ENCODE measurements at regions of chr17 and their contacts with region 1.

Region 1: DNA sequence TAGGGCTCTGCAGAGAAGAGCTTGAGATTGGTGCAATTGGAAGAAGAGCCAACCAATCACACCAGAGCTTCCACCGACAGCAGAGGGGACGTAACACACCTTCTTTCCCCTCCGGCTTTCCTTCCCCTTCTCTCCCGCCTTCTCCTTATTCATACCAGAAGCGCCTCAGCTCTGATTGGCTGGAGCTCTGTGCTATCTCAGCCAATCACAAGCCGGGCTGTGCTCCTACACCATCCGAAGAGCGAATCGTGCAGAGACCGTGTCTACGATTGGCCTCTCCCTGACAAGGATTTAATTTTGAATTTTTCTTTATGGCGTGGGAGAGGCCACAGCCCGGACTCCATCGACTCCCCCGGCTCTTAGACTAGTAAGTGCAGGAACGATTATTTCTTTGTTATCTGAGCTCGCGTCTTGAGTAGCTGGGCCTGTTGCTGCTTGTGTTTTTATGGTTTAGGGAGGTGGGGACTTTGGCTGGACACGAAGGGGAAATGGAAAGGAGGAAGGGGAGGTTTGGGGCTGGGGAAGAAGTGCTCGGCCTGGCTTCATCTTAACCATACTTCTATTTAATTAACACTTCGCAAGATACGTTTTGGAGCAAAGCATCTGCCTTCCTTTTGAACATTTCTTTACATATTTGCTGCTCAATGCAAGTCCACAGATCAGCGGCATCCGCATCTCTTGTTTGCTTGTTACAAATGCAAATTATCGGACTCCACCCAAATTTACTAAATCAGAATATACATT is at the start of gene PRR11:
- DNase-seq: peak; percentile 81 to 99 (median 88)
- ATAC-seq: peak; percentile 84
- H3K4me3 ChIP-seq: peak within 1 kb of the TSS; percentile 87
- H3K4me3 Mint-ChIP-seq: no peak within 1 kb of the TSS
- H3K27ac ChIP-seq: peak within 1 kb of the TSS; percentile 39 to 73
- H3K27ac Mint-ChIP-seq: no peak within 1 kb of the TSS
- H3K4me1 ChIP-seq: peaks cover 27% of the 10 kb centered on the region
- H3K4me1 Mint-ChIP-seq: peaks cover 38% of the 10 kb centered on the region
- H3K27me3 ChIP-seq: no peaks in the 10 kb centered on the region
- H3K27me3 Mint-ChIP-seq: no peaks in the 10 kb centered on the region
- CTCF ChIP-seq: no peak
- total RNA-seq, gene PRR11: 0.69 to 0.92 TPM

Region 2: GRCh38 chr17:57255776-57256681 is 1899.6 kb before region 1 on chr17 and contains the start of gene MSI2:
- CTCF ChIA-PET with region 1: no interaction called
- POLR2A ChIA-PET with region 1: interaction called, 3 read pairs
- intact Hi-C with region 1: loop called in 1 of 2 experiments (anchors 10 kb)
- DNase-seq: peak; percentile 82 to 96 (median 90)
- ATAC-seq: peak; percentile 71
- H3K4me3 ChIP-seq: peak within 1 kb of the TSS; percentile 74
- H3K4me3 Mint-ChIP-seq: peak within 1 kb of the TSS; percentile 99
- H3K27ac ChIP-seq: peak within 1 kb of the TSS; percentile 72 to 82
- H3K27ac Mint-ChIP-seq: peak within 1 kb of the TSS; percentile 98
- H3K4me1 ChIP-seq: peaks cover 35% of the 10 kb centered on the region
- H3K4me1 Mint-ChIP-seq: peaks cover 48% of the 10 kb centered on the region
- H3K27me3 ChIP-seq: no peaks in the 10 kb centered on the region
- H3K27me3 Mint-ChIP-seq: no peaks in the 10 kb centered on the region
- CTCF ChIP-seq: no peak
- total RNA-seq, gene MSI2: 129 to 132 TPM

Region 3: GRCh38 chr17:58692239-58693055 is 463.2 kb before region 1 on chr17 and contains the start of gene RAD51C:
- CTCF ChIA-PET with region 1: no interaction called
- POLR2A ChIA-PET with region 1: no interaction called
- intact Hi-C with region 1: loop called in 1 of 2 experiments (anchors 10 kb)
- DNase-seq: peak; percentile 70 to 92 (median 84)
- ATAC-seq: peak; percentile 96
- H3K4me3 ChIP-seq: peak within 1 kb of the TSS; percentile 79
- H3K4me3 Mint-ChIP-seq: peak within 1 kb of the TSS; percentile 93
- H3K27ac ChIP-seq: peak within 1 kb of the TSS; percentile 66 to 83
- H3K27ac Mint-ChIP-seq: peak within 1 kb of the TSS; percentile 86
- H3K4me1 ChIP-seq: peaks cover 13% of the 10 kb centered on the region
- H3K4me1 Mint-ChIP-seq: peaks cover 28% of the 10 kb centered on the region
- H3K27me3 ChIP-seq: no peaks in the 10 kb centered on the region
- H3K27me3 Mint-ChIP-seq: no peaks in the 10 kb centered on the region
- CTCF ChIP-seq: no peak
- total RNA-seq, gene RAD51C: 10.4 to 11.6 TPM

Region 4: GRCh38 chr17:59202320-59202719 is 46.7 kb after region 1 on chr17:
- CTCF ChIA-PET with region 1: no interaction called
- POLR2A ChIA-PET with region 1: no interaction called
- intact Hi-C with region 1: loop called in 1 of 2 experiments (anchors 5 kb)
- DNase-seq: no peak
- ATAC-seq: no peak
- H3K4me3 ChIP-seq: no peak overlapping the region
- H3K4me3 Mint-ChIP-seq: no peak overlapping the region
- H3K27ac ChIP-seq: no peak overlapping the region
- H3K27ac Mint-ChIP-seq: no peak overlapping the region
- H3K4me1 ChIP-seq: no peaks in the 10 kb centered on the region
- H3K4me1 Mint-ChIP-seq: no peaks in the 10 kb centered on the region
- H3K27me3 ChIP-seq: no peaks in the 10 kb centered on the region
- H3K27me3 Mint-ChIP-seq: no peaks in the 10 kb centered on the region
- CTCF ChIP-seq: no peak

Region 5: DNA sequence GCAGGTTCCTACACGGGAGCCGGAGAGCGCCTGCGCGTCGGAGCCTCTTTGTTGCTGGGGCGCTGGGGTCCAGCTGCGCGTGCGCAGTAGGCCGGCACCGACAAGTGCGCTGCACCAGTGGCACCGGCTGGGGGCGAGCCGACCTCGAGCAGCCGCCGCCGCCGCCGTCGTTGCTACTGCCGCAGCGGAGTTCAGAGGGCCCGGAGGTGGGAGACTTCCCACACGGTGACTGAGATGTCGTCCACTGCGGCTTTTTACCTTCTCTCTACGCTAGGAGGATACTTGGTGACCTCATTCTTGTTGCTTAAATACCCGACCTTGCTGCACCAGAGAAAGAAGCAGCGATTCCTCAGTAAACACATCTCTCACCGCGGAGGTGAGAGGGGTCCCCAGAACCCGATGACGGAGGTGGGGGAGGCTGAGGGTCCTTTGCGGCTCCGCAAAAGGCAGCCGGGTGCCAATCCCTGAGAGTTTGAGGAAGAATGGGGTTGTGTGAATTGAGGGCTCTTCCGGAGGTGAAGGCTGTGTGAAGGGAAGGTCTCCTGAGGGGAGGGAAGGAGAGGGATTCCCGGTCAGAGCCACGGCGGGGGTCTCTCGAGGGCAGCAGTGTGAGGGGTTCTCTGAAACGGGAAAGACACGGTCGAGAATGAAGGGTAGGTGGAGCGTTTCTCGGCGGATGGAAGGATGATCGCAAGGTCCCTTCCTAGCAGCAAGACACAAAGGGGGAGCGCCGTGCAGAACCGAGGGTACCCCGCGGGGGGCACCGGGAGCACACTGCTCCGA is 65.0 kb after region 1 on chr17 and contains the start of gene GDPD1:
- CTCF ChIA-PET with region 1: no interaction called
- POLR2A ChIA-PET with region 1: interaction called, 16 read pairs
- intact Hi-C with region 1: loop called in 1 of 2 experiments (anchors 2 kb)
- DNase-seq: peak; percentile 94 to 99 (median 97)
- ATAC-seq: peak; percentile 97
- H3K4me3 ChIP-seq: peak within 1 kb of the TSS; percentile 67
- H3K4me3 Mint-ChIP-seq: peak within 1 kb of the TSS; percentile 96
- H3K27ac ChIP-seq: peak within 1 kb of the TSS; percentile 66 to 87
- H3K27ac Mint-ChIP-seq: peak within 1 kb of the TSS; percentile 99
- H3K4me1 ChIP-seq: peaks cover 10% of the 10 kb centered on the region
- H3K4me1 Mint-ChIP-seq: peaks cover 16% of the 10 kb centered on the region
- H3K27me3 ChIP-seq: no peaks in the 10 kb centered on the region
- H3K27me3 Mint-ChIP-seq: no peaks in the 10 kb centered on the region
- CTCF ChIP-seq: peak; percentile 79
- total RNA-seq, gene GDPD1: 2.0 to 2.3 TPM

Region 6: GRCh38 chr17:59565171-59565969 is 409.8 kb after region 1 on chr17 and contains the start of gene DHX40:
- CTCF ChIA-PET with region 1: no interaction called
- POLR2A ChIA-PET with region 1: interaction called, 10 read pairs
- intact Hi-C with region 1: loop called in 1 of 2 experiments (anchors 10 kb)
- DNase-seq: peak; percentile 86 to 99 (median 92)
- ATAC-seq: peak; percentile 87
- H3K4me3 ChIP-seq: peak within 1 kb of the TSS; percentile 90
- H3K4me3 Mint-ChIP-seq: peak within 1 kb of the TSS; percentile 100
- H3K27ac ChIP-seq: peak within 1 kb of the TSS; percentile 86 to 91
- H3K27ac Mint-ChIP-seq: peak within 1 kb of the TSS; percentile 97
- H3K4me1 ChIP-seq: peaks cover 13% of the 10 kb centered on the region
- H3K4me1 Mint-ChIP-seq: peaks cover 26% of the 10 kb centered on the region
- H3K27me3 ChIP-seq: no peaks in the 10 kb centered on the region
- H3K27me3 Mint-ChIP-seq: no peaks in the 10 kb centered on the region
- CTCF ChIP-seq: no peak
- total RNA-seq, gene DHX40: 62.6 to 65.6 TPM

Region 7: DNA sequence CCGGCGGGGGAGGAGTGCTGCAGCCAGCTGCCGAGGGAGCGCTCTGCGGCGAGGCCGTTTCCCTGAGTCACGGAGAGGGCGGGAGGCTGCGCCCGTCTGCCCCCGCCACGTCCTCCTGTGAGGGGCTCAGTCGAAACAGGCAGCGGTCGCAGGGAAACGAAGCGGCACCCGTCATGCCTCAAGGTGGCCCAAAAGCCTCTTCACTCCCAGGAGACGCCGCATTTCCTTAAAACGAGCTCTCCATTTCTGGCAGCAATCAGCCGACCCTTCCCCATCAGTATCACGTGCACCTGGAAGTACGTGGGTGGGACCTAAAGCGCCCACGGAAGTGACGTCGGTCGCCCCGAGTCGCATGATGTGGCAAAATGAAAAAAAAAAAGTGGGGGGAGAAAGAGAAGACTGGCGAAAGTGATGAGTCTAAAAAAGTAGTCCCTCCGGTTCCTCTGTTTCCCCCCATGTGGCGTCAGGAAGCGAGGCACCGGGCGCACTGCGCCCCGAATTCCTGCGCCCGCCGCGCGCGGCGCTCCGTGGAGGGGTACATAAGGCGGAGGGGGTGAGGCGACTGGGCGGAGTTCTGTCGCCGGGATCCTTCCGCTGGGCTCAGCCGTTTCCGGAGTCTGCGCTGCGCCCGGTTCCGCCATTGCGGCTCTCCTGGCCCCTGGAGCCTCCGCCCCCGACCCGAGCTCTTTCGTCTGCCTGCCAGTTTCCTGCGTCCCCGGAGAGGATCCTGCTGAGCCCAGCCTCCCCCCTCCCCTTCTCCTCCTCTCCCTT is 463.9 kb after region 1 on chr17 and contains the start of gene CLTC:
- CTCF ChIA-PET with region 1: no interaction called
- POLR2A ChIA-PET with region 1: interaction called, 14 read pairs
- intact Hi-C with region 1: no loop called
- DNase-seq: peak; percentile 81 to 98 (median 88)
- ATAC-seq: peak; percentile 82
- H3K4me3 ChIP-seq: peak within 1 kb of the TSS; percentile 96
- H3K4me3 Mint-ChIP-seq: peak within 1 kb of the TSS; percentile 97
- H3K27ac ChIP-seq: peak within 1 kb of the TSS; percentile 95 to 96
- H3K27ac Mint-ChIP-seq: peak within 1 kb of the TSS; percentile 98
- H3K4me1 ChIP-seq: peaks cover 22% of the 10 kb centered on the region
- H3K4me1 Mint-ChIP-seq: peaks cover 66% of the 10 kb centered on the region
- H3K27me3 ChIP-seq: no peaks in the 10 kb centered on the region
- H3K27me3 Mint-ChIP-seq: no peaks in the 10 kb centered on the region
- CTCF ChIP-seq: no peak
- total RNA-seq, gene CLTC: 81.5 to 89.9 TPM

Measured in CD4-positive, alpha-beta T cell (primary cell).